MCF 10A (cell line): ENCODE measurements at regions of chr6 and their contacts with region 1.

Region 1: GRCh38 chr6:19024737-19025136 is 637.6 kb downstream of the RNF144B start:
- DNase-seq: peak; percentile 66
- H3K4me3 Mint-ChIP-seq: no peak overlapping the region
- H3K27ac Mint-ChIP-seq: no peak overlapping the region
- H3K4me1 Mint-ChIP-seq: no peaks in the 10 kb centered on the region
- H3K27me3 Mint-ChIP-seq: no peaks in the 10 kb centered on the region
- CTCF ChIP-seq: peak; percentile 65

Region 2: DNA sequence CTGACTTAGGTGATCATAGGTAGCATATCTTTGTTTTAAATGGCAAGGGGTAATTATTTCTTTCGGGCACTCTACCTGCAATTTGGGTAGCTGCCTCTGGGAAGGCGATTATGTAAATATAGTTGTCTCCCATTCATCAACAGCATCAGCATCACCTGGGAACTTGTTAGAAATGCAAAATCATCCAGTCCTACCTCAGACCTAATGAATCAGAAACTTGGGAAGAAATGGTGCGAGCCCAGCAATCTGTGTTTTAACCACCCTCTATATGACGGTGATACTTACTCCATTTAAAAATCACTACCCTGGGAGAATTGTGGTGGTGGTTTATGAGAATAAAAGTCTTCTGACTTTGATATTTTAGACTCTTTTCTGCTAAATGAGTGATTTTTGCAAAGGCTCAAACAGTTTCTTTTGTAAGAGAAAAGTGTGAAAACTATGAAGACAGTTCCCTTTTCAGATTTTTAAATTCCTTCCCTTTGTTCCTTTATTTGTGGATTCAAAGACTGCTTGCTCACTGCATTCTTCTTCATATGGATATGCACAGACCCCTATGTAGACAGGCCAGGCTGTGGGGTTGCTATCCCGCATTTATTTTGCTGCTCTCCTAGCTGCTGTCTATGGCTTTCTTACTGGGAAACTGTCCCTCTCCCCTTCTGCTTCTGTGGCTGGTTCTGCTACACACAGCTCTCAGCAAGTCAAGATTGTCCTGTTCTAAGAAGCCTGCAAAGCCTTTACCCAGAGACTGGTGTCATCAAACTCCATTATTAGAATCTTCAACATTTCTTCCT is 272.3 kb before region 1 on chr6:
- CTCF ChIA-PET with region 1: interaction called, 11 read pairs
- POLR2A ChIA-PET with region 1: no interaction called
- intact Hi-C with region 1: no loop called
- DNase-seq: no peak
- H3K4me3 Mint-ChIP-seq: no peak overlapping the region
- H3K27ac Mint-ChIP-seq: no peak overlapping the region
- H3K4me1 Mint-ChIP-seq: peaks cover 17% of the 10 kb centered on the region
- H3K27me3 Mint-ChIP-seq: peaks cover 61% of the 10 kb centered on the region
- CTCF ChIP-seq: no peak

Region 3: GRCh38 chr6:19013026-19013705 is 11.6 kb before region 1 on chr6:
- CTCF ChIA-PET with region 1: interaction called, 15 read pairs
- POLR2A ChIA-PET with region 1: no interaction called
- intact Hi-C with region 1: no loop called
- DNase-seq: peak; percentile 23
- H3K4me3 Mint-ChIP-seq: no peak overlapping the region
- H3K27ac Mint-ChIP-seq: no peak overlapping the region
- H3K4me1 Mint-ChIP-seq: no peaks in the 10 kb centered on the region
- H3K27me3 Mint-ChIP-seq: peaks cover 29% of the 10 kb centered on the region
- CTCF ChIP-seq: no peak

Region 4: DNA sequence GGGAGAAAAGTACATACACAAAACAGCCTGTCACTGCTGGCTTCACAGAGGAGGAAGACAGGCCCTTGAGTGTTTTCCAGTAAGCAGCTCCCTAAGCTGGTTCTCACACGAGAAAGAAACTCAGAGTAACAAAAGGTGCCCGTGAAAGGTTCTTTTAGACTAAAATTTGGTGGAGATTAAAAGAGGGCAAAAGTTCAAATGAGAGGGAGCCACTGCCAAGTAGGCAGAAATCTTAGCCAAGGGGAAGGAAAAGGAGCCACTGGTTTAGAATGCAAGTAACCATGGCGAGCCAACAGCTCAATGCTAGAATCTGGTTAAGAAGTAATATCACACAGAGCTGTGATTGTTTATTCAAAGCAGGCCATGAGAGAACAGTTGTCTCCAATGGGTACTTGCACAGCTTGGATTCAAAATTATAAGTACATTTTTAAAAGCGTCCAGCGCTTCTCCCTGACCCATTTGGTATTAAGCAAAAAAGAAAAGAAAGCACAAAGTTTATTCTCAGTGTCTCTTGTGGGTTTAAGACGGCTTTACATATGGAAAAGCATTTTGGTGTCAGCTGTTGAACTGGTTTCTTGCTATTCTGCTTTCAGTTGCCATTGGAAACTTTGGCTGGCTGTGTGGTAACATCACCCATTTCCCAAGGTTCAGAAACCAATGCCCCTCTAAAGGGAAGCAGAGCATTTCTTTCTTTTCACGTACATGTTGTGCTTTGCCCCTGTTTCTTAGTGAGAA is 10.9 kb after region 1 on chr6:
- CTCF ChIA-PET with region 1: interaction called, 12 read pairs
- POLR2A ChIA-PET with region 1: interaction called, 6 read pairs
- intact Hi-C with region 1: no loop called
- DNase-seq: no peak
- H3K4me3 Mint-ChIP-seq: no peak overlapping the region
- H3K27ac Mint-ChIP-seq: no peak overlapping the region
- H3K4me1 Mint-ChIP-seq: no peaks in the 10 kb centered on the region
- H3K27me3 Mint-ChIP-seq: no peaks in the 10 kb centered on the region
- CTCF ChIP-seq: no peak

Region 5: GRCh38 chr6:19086480-19086879 is 61.7 kb after region 1 on chr6:
- CTCF ChIA-PET with region 1: no interaction called
- POLR2A ChIA-PET with region 1: no interaction called
- intact Hi-C with region 1: no loop called
- DNase-seq: no peak
- H3K4me3 Mint-ChIP-seq: no peak overlapping the region
- H3K27ac Mint-ChIP-seq: no peak overlapping the region
- H3K4me1 Mint-ChIP-seq: no peaks in the 10 kb centered on the region
- H3K27me3 Mint-ChIP-seq: no peaks in the 10 kb centered on the region
- CTCF ChIP-seq: no peak

Region 6: GRCh38 chr6:19322691-19323485 is 298.2 kb after region 1 on chr6:
- CTCF ChIA-PET with region 1: interaction called, 9 read pairs
- POLR2A ChIA-PET with region 1: no interaction called
- intact Hi-C with region 1: loop called (anchors 2 kb)
- DNase-seq: no peak
- H3K4me3 Mint-ChIP-seq: no peak overlapping the region
- H3K27ac Mint-ChIP-seq: no peak overlapping the region
- H3K4me1 Mint-ChIP-seq: no peaks in the 10 kb centered on the region
- H3K27me3 Mint-ChIP-seq: no peaks in the 10 kb centered on the region
- CTCF ChIP-seq: peak; percentile 12

Region 7: GRCh38 chr6:19857703-19858102 is 833.0 kb after region 1 on chr6:
- CTCF ChIA-PET with region 1: interaction called, 10 read pairs
- POLR2A ChIA-PET with region 1: interaction called, 3 read pairs
- intact Hi-C with region 1: no loop called
- DNase-seq: no peak
- H3K4me3 Mint-ChIP-seq: no peak overlapping the region
- H3K27ac Mint-ChIP-seq: peak overlapping the region; percentile 59
- H3K4me1 Mint-ChIP-seq: no peaks in the 10 kb centered on the region
- H3K27me3 Mint-ChIP-seq: peaks cover 30% of the 10 kb centered on the region
- CTCF ChIP-seq: no peak

Region 8: GRCh38 chr6:20056350-20056992 is 1031.7 kb after region 1 on chr6:
- CTCF ChIA-PET with region 1: interaction called, 23 read pairs
- POLR2A ChIA-PET with region 1: no interaction called
- intact Hi-C with region 1: loop called (anchors 1 kb)
- DNase-seq: peak; percentile 48
- H3K4me3 Mint-ChIP-seq: no peak overlapping the region
- H3K27ac Mint-ChIP-seq: no peak overlapping the region
- H3K4me1 Mint-ChIP-seq: no peaks in the 10 kb centered on the region
- H3K27me3 Mint-ChIP-seq: no peaks in the 10 kb centered on the region
- CTCF ChIP-seq: peak; percentile 54